ENCODE measurements at regions of chr10 and their contacts with region 1.

Region 1: DNA sequence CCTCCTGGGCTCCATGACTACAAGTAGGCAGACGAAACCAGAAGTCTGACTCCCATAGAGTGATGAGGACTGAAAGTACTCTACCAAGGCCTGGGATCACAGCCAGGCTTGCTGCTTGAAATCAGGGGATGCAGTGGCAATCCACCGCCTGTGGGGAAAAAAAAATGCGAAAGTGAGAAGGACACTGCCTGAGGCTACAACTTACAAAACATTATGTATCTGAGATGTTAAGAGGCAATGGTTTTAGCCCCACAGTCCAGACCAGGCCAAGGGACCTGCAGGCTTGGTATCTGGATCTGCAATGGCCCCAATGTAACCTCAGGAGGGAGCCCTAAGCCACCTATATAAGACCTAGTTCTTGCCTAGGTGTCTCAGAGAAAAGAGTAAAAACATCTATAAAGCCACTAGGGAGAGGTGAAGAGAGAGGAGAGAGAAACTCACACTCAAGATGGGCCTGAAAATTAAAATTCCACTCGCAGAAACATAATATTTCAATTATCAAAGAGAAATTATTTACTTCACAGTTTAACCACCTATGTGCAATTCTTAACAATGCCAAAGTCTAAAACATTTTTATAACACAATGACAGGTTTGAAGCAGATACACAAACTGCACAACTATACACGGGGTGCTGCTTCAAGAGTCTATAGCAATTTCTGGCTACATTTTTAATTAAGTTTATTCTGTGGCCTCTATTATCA is 13.9 kb downstream of the DNAJC1 start:
- DNase-seq: peak in 8 of 10 donors; percentile 37 to 92 (median 67)

Region 2: GRCh38 chr10:22791655-22792054 is 802.1 kb after region 1 on chr10:
- intact Hi-C with region 1: no loop called
- DNase-seq: no peak

Region 3: GRCh38 chr10:23067939-23068775 is 1078.6 kb after region 1 on chr10:
- intact Hi-C with region 1: loop called (anchors 5 kb)
- DNase-seq: peak; percentile 58 to 96 (median 74)

Region 4: GRCh38 chr10:23081891-23082290 is 1092.3 kb after region 1 on chr10:
- intact Hi-C with region 1: no loop called
- DNase-seq: no peak

Region 5: GRCh38 chr10:23095404-23095965 is 1105.9 kb after region 1 on chr10 and contains the start of gene MSRB2:
- intact Hi-C with region 1: loop called (anchors 10 kb)
- DNase-seq: peak; percentile 75 to 97 (median 86)

Measured in posterior cingulate gyrus (tissue), 11 donors.